Activated B cell treated with CpG ODN at 0.5 μM for 24 hours (primary cell): ENCODE measurements at regions of chr16 and their contacts with region 1.

Region 1: GRCh38 chr16:10787304-10787703 is 31.3 kb downstream of the TVP23A start:
- DNase-seq: peak; percentile 29
- ATAC-seq: peak; percentile 92
- H3K4me3 Mint-ChIP-seq: no peak overlapping the region
- H3K27ac Mint-ChIP-seq: peak overlapping the region; percentile 44
- H3K4me1 Mint-ChIP-seq: peaks cover 52% of the 10 kb centered on the region
- H3K27me3 Mint-ChIP-seq: no peaks in the 10 kb centered on the region
- CTCF ChIP-seq: no peak

Region 2: DNA sequence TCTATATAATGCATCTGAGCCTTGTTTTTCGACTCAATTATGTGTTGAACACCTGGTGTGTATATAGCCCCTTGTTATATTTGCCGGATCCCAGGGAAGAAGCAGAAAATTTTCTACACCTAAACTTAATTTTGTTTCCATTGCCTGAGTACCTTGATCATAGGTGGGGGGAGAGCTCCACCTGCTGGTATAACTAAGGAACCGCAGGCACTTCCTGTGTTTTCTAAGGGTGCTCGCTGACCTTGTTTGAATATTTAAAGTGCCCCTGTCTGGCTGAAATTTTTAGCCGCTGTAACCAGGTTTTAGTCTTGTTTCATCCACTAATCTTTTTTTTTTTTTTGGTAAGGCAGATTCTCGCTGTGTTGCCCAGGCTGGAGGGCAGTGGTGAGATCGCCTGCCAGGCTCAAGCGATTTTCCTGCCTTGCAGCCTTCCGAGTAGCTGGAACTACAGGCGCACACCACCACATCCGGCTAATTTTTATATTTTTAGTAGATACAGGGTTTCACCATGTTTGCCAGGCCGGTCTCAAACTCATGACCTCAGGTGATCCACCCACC is 50.2 kb before region 1 on chr16:
- CTCF ChIA-PET with region 1: no interaction called
- POLR2A ChIA-PET with region 1: no interaction called
- intact Hi-C with region 1: no loop called
- DNase-seq: no peak
- ATAC-seq: peak; percentile 65
- H3K4me3 Mint-ChIP-seq: peak overlapping the region; percentile 68
- H3K27ac Mint-ChIP-seq: peak overlapping the region; percentile 90
- H3K4me1 Mint-ChIP-seq: peaks cover 51% of the 10 kb centered on the region
- H3K27me3 Mint-ChIP-seq: no peaks in the 10 kb centered on the region
- CTCF ChIP-seq: peak; percentile 60

Region 3: DNA sequence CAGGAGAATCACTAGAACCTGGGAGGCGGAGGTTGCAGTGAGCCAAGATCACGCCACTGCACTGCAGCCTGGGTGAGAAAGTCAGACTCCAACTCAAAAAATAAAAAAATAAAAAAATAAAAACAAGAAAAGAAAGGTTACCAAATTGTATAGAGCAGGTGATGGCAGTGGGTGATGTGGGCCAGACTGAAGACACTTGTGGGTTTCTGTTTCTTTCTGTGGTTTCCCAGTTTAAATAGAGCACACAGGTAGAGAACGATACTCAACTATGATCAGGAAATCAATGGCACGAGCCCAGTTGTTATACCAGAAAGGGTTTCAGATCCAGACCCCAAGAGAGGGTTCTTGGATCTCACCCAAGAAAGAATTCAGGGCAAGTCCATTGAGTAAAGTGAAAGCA is 11.0 kb before region 1 on chr16:
- CTCF ChIA-PET with region 1: no interaction called
- POLR2A ChIA-PET with region 1: no interaction called
- intact Hi-C with region 1: loop called (anchors 2 kb)
- DNase-seq: no peak
- ATAC-seq: peak; percentile 26
- H3K4me3 Mint-ChIP-seq: no peak overlapping the region
- H3K27ac Mint-ChIP-seq: peak overlapping the region; percentile 9
- H3K4me1 Mint-ChIP-seq: peaks cover 41% of the 10 kb centered on the region
- H3K27me3 Mint-ChIP-seq: no peaks in the 10 kb centered on the region
- CTCF ChIP-seq: no peak

Region 4: GRCh38 chr16:10846213-10846998 is 59.1 kb after region 1 on chr16:
- CTCF ChIA-PET with region 1: no interaction called
- POLR2A ChIA-PET with region 1: no interaction called
- intact Hi-C with region 1: no loop called
- DNase-seq: no peak
- ATAC-seq: no peak
- H3K4me3 Mint-ChIP-seq: no peak overlapping the region
- H3K27ac Mint-ChIP-seq: no peak overlapping the region
- H3K4me1 Mint-ChIP-seq: peaks cover 55% of the 10 kb centered on the region
- H3K27me3 Mint-ChIP-seq: no peaks in the 10 kb centered on the region
- CTCF ChIP-seq: no peak